ENCODE measurements at regions of chr2 and their contacts with region 1.

Region 1: DNA sequence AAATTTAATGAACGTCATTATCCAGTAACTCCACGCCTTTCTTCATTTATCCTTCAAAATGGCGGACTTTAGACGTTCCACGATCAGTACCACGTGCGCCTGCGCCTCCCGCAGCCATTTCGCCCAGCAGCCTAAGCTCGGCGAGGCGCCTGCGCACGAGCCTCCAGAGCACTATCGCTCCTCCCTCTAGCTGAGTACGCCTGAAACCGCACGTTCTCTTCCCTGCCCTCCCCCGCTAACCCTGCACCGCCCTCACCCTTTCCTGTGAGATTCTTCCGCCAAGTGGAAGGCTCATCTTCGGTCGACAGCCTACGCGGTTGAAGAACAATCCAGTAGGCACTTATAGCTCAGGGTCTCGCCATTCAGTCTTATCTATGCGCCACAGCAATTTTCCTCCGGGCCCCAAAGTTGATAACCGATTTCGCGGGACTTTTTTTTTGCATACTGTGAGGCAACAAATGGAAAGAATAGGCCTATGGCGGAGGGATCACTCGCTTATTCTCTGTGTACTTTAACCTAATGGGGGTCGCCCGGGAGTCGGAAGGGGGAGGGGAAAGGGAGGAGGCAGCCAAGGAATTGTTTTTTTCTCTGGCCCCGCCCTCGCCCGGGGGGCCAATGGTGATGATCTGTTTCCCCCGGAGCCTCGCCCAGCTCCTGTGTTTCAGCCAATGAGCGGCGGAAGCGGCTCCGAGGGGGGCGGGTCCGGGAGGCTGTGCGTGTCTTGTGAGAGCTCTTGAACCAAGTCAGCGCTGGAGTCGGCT is at the start of gene KDM3A:
- DNase-seq: peak; percentile 96 to 99 (median 96)
- ATAC-seq: peak; percentile 96
- H3K4me3 ChIP-seq: peak within 1 kb of the TSS; percentile 58
- H3K27ac ChIP-seq: peak within 1 kb of the TSS; percentile 99
- H3K4me1 ChIP-seq: peaks cover 5 to 11% of the 10 kb centered on the region in 2 experiments; a peak in 4 of 5 replicates
- H3K27me3 ChIP-seq: no peaks in the 10 kb centered on the region
- CTCF ChIP-seq: 0 out of 6 replicates have a peak, but pooled peaks of 1 of the 3 experiments have one; percentile 5
- EP300 ChIP-seq: no peak; the same call in none of the 2 replicates
- POLR2A ChIP-seq: no peak
- RAD21 ChIP-seq: peak; percentile 16 to 30; a peak in 2 of 4 replicates
- polyA plus RNA-seq, gene KDM3A: 7.5 to 11.7 TPM

Region 2: DNA sequence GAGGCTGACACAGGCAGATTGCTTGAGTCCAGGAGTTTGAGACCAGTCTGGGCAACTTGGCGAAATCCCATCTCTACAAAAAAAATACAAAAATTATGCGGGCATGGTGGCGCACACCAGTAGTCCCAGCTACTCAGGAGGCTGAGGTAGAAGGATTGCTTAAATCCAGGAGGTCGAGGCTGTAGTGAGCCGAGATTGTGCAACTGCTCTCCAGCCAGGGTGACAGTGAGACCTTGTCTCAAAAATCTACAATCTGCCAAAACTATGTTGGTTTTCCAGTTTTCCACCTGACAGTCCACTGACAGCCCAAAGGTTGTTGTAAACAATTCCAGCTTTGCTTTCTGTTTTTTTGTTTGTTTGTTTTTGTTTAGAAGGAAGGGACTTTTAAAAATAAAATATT is 1418.6 kb before region 1 on chr2:
- CTCF ChIA-PET with region 1: no interaction called
- POLR2A ChIA-PET with region 1: no interaction called
- in situ Hi-C with region 1: no loop called
- intact Hi-C with region 1: no loop called
- DNase-seq: no peak
- ATAC-seq: no peak
- H3K4me3 ChIP-seq: no peak overlapping the region
- H3K27ac ChIP-seq: no peak overlapping the region
- H3K4me1 ChIP-seq: peaks cover 0 to 4% of the 10 kb centered on the region in 2 experiments; a peak in 2 of 5 replicates
- H3K27me3 ChIP-seq: no peaks in the 10 kb centered on the region
- CTCF ChIP-seq: no peak
- EP300 ChIP-seq: no peak
- POLR2A ChIP-seq: no peak
- RAD21 ChIP-seq: no peak

Region 3: DNA sequence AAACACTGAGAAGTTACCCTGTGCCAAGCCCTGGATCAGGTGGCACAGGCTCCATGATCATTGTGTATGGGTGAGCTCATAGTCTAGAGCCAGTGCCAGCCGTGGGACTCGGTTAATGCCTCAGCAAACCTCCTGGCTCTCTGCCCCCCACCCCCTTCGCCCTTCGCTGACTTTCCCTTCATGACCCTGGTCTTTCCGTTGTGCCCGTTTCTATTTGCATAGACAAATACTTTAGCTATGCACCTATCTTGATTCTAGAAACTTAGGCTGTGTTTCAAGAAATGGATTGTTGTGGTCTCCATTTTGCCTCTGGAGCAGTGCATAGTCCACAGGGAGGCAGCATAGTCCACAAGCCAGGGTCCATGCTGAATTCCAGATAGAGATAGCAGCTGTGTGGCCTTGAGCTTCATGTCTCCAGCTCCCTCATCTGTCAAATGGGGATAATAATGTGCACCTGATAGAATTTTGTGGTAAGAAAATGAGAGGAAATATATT is 44.5 kb before region 1 on chr2:
- CTCF ChIA-PET with region 1: no interaction called
- POLR2A ChIA-PET with region 1: interaction called, 6 read pairs
- in situ Hi-C with region 1: no loop called
- intact Hi-C with region 1: loop called (anchors 5 kb)
- DNase-seq: peak; percentile 24 to 65 (median 34)
- ATAC-seq: peak; percentile 90
- H3K4me3 ChIP-seq: no peak overlapping the region
- H3K27ac ChIP-seq: no peak overlapping the region
- H3K4me1 ChIP-seq: peaks cover 0 to 9% of the 10 kb centered on the region in 2 experiments; a peak in 1 of 5 replicates
- H3K27me3 ChIP-seq: no peaks in the 10 kb centered on the region; a peak in 2 of 5 replicates
- CTCF ChIP-seq: peak; percentile 69 to 81 (median 76)
- EP300 ChIP-seq: no peak
- POLR2A ChIP-seq: no peak
- RAD21 ChIP-seq: peak; percentile 87 to 89

Region 4: DNA sequence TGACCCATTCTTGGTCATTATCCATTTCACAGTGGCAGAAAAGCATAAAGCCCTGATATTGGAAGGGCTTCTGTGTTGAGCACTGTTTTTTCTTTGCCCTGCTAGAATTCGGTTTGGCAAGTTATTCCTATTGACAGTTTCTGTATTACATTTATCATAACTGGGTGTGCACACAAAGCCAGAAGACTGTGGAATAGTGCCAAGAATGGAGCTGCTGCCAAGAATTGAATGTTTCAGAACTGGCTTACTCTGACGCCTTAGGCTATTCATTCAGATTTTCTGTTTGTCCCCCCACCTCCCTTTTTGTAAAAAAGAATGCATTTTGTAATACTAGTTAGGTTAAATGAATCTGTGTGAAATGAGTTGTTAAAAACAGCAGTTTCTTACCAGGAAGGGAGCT is 13.0 kb after region 1 on chr2:
- CTCF ChIA-PET with region 1: no interaction called
- POLR2A ChIA-PET with region 1: interaction called, 26 read pairs
- in situ Hi-C with region 1: no loop called
- intact Hi-C with region 1: no loop called
- DNase-seq: no peak
- ATAC-seq: no peak
- H3K4me3 ChIP-seq: no peak overlapping the region
- H3K27ac ChIP-seq: no peak overlapping the region
- H3K4me1 ChIP-seq: no peaks in the 10 kb centered on the region
- H3K27me3 ChIP-seq: no peaks in the 10 kb centered on the region
- CTCF ChIP-seq: no peak
- EP300 ChIP-seq: no peak
- POLR2A ChIP-seq: no peak
- RAD21 ChIP-seq: no peak

Region 5: DNA sequence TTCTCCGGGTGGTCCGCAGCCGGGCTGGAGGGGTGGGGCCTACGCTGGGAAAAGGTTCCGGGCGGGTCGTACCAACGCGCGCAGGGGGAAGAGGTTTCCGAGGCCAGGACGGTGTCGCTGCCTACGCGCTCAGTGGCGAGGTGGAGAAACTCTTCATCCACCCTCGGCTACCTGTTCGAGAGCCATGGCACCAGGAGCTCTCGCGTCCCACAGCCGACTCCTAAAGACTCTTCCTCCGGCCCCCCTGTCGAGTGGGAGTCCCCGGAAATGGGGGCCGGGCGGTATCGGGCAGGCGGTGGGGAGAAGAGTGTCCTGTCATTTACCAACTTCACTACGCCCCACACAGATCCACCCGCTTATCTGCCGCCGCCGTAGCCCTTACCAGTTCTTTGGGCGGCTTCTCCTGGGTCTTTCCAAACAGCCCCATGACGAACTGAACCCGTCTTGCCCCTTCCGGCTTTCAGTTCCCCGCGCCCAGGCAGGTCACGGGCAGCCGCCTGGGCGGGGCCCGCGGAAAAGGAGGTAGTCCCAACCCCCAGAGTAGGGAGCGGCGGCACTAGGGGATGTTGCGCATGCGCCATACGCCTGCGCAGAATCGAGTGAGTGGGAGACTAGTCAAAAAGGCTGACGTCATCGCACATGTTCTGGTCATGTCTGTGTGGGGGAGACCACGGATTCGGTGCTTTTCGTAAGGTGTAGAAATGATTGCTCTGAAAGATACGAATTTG is 122.3 kb after region 1 on chr2 and contains the start of gene CHMP3:
- CTCF ChIA-PET with region 1: no interaction called
- POLR2A ChIA-PET with region 1: interaction called, 4 read pairs
- in situ Hi-C with region 1: no loop called
- intact Hi-C with region 1: loop called (anchors 1 kb)
- DNase-seq: peak; percentile 98 to 99 (median 98)
- ATAC-seq: peak; percentile 94
- H3K4me3 ChIP-seq: peak within 1 kb of the TSS; percentile 74
- H3K27ac ChIP-seq: peak within 1 kb of the TSS; percentile 100
- H3K4me1 ChIP-seq: peaks cover 0 to 17% of the 10 kb centered on the region in 2 experiments; a peak in 3 of 5 replicates
- H3K27me3 ChIP-seq: no peaks in the 10 kb centered on the region
- CTCF ChIP-seq: no peak
- EP300 ChIP-seq: 0 out of 2 replicates have a peak, but pooled peaks have one; percentile 10
- POLR2A ChIP-seq: peak; percentile 96
- RAD21 ChIP-seq: no peak
- polyA plus RNA-seq, gene CHMP3: 20.6 to 26.3 TPM

Region 6: GRCh38 chr2:86623651-86624541 is 183.1 kb after region 1 on chr2 and contains the start of gene RNF103:
- CTCF ChIA-PET with region 1: no interaction called
- POLR2A ChIA-PET with region 1: interaction called, 6 read pairs
- in situ Hi-C with region 1: no loop called
- intact Hi-C with region 1: loop called (anchors 5 kb)
- DNase-seq: peak; percentile 91 to 94 (median 91)
- ATAC-seq: peak; percentile 94
- H3K4me3 ChIP-seq: peak within 1 kb of the TSS; percentile 61
- H3K27ac ChIP-seq: peak within 1 kb of the TSS; percentile 85
- H3K4me1 ChIP-seq: peaks cover 4 to 13% of the 10 kb centered on the region in 2 experiments; a peak in 4 of 5 replicates
- H3K27me3 ChIP-seq: no peaks in the 10 kb centered on the region
- CTCF ChIP-seq: no peak
- EP300 ChIP-seq: no peak
- POLR2A ChIP-seq: peak; percentile 78
- RAD21 ChIP-seq: 0 out of 4 replicates have a peak, but pooled peaks of 1 of the 2 experiments have one; percentile 10
- polyA plus RNA-seq, gene RNF103: 1.2 to 1.4 TPM